Right ventricle myocardium inferior (tissue), 1 donor: ENCODE measurements at regions of chr22 and their contacts with region 1.

Region 1: GRCh38 chr22:41367039-41367679 is 14.6 kb upstream of the TEF start:
- DNase-seq: peak; percentile 96
- ATAC-seq: peak; percentile 96

Region 2: DNA sequence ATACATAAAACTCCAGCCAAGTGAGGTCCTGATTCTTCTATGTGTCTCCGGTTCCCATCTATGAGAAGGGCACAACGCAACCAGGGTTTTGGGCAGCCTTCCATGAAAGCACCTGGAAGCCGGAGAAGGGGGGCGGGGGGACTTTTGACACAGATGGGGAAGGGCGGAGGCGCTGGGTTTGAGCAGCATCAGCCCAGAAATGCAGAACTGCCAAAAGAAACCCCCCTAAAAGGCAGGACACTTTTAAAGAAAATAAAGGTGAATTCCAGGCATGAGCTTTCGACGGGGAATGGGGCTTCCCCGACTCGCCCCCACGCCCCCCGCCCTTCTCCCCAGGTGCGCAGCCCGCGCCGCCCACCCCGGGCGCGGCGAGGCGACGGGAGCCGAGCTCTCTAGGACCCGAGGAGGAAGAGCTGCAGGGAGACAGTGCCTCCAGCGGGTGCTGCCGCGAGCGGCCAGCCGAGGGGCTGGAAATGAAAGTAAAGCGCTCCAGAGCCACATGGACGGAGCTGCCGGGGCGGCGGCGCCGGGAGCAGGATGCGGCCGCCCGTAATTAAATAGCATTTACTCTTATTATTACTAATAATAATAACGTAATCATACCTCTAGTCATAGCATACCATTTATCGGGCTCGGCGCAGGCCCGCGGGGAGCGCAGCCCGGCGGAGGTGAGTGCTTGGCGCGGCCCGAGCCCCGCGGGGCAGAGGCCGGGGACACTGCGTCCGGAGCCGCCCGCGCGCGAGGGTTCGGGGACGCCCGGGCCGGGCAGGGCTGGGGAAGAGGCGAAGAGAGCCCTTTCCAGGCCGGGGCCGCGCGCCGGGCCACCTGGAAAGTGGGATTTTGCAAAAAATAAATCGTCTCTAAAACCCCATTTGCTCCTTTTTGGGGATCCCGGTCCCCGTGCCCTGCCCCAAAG is 65.8 kb before region 1 on chr22 and contains the start of gene ZC3H7B:
- intact Hi-C with region 1: loop called (anchors 5 kb)
- DNase-seq: peak; percentile 94
- ATAC-seq: peak; percentile 96
- total RNA-seq, gene ZC3H7B: 45.5 TPM

Region 3: DNA sequence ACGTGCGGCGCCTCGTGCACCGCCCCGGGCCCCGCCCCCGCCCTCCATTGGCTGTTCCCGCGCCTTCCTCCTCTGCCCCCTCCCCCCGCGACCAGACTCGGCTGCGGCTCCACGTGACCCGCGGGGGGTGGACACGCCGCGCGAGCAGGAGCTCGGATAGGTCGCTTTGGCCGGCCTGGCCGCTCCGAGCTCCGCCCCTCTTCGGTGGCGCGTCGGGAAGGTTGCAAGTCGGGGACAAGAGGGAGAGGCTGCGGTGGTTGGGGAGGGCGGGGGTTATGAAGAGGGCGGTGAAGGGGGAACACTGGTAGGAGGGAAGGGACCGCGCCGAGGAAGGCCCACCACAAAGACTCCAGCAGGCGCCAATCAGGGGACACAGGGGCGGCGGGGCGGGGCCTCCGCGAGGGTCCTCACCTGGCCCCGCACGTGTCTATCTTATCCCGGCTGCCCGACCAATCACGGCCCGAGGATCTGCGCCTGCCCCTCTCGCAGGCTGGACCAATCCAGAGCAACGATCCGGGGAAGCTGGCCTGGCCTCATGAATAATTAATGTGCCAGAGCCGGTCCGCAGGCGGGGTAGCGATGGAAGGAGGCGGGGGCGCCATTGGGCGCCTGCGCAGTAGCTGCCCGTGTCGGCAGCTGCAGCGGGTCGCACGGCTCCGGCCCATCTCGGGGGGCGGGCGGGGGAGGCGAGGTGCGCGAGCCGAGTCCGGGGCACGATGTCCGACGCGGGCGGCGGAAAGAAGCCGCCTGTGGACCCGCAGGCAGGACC is 14.4 kb after region 1 on chr22 and contains the start of gene TEF:
- intact Hi-C with region 1: loop called (anchors 1 kb)
- DNase-seq: peak; percentile 99
- ATAC-seq: peak; percentile 87
- total RNA-seq, gene TEF: 23.5 TPM